Activated CD4-positive, alpha-beta memory T cell treated with anti-CD3 and anti-CD28 coated beads for 36 hours (primary cell): ENCODE measurements at regions of chr10 and their contacts with region 1.

Region 1: GRCh38 chr10:73730153-73730906 is 13.8 kb upstream of the SEC24C start:
- DNase-seq: peak; percentile 96
- H3K4me3 Mint-ChIP-seq: peak overlapping the region; percentile 99
- H3K27ac Mint-ChIP-seq: peak overlapping the region; percentile 99
- H3K4me1 Mint-ChIP-seq: peaks cover 11% of the 10 kb centered on the region
- H3K27me3 Mint-ChIP-seq: no peaks in the 10 kb centered on the region

Region 2: GRCh38 chr10:73759512-73760115 is 29.3 kb after region 1 on chr10:
- CTCF ChIA-PET with region 1: interaction called, 3 read pairs
- POLR2A ChIA-PET with region 1: interaction called, 8 read pairs
- intact Hi-C with region 1: loop called (anchors 1 kb)
- DNase-seq: peak; percentile 67
- H3K4me3 Mint-ChIP-seq: no peak overlapping the region
- H3K27ac Mint-ChIP-seq: peak overlapping the region; percentile 82
- H3K4me1 Mint-ChIP-seq: peaks cover 65% of the 10 kb centered on the region
- H3K27me3 Mint-ChIP-seq: no peaks in the 10 kb centered on the region

Region 3: GRCh38 chr10:73785221-73785720 is 54.9 kb after region 1 on chr10 and contains the start of gene ZSWIM8:
- CTCF ChIA-PET with region 1: interaction called, 3 read pairs
- POLR2A ChIA-PET with region 1: interaction called, 8 read pairs
- intact Hi-C with region 1: loop called (anchors 1 kb)
- DNase-seq: peak; percentile 90
- H3K4me3 Mint-ChIP-seq: peak within 1 kb of the TSS; percentile 98
- H3K27ac Mint-ChIP-seq: peak within 1 kb of the TSS; percentile 96
- H3K4me1 Mint-ChIP-seq: peaks cover 40% of the 10 kb centered on the region
- H3K27me3 Mint-ChIP-seq: no peaks in the 10 kb centered on the region
- total RNA-seq, gene ZSWIM8: 45.1 to 46.2 TPM